ENCODE measurements at regions of chr2 and their contacts with region 1.

Region 1: DNA sequence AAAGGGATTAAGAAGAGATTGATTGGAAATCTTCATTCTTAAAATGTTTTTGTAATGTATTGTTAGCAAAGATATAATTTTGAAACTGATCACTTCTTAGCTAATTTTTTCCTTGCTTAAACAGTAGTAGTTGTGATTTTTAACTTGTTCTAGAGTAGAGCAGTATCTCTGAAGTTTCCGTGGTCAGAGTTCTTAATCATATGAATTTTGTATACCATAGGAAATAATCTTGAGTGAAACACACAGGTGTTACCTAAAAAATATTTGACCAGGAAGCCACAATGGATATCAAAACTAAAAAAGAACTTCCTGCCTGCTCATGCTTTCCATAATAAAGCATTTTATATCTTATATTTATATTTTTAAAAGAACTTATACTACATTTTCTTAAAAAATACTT is 907.1 kb downstream of the ERBB4 start:
- DNase-seq: no peak
- ATAC-seq: no peak
- H3K4me3 ChIP-seq: no peak overlapping the region
- H3K27ac ChIP-seq: no peak overlapping the region
- H3K4me1 ChIP-seq: no peaks in the 10 kb centered on the region
- H3K27me3 ChIP-seq: no peaks in the 10 kb centered on the region
- CTCF ChIP-seq: no peak
- EP300 ChIP-seq: no peak
- POLR2A ChIP-seq: no peak
- RAD21 ChIP-seq: no peak

Region 2: DNA sequence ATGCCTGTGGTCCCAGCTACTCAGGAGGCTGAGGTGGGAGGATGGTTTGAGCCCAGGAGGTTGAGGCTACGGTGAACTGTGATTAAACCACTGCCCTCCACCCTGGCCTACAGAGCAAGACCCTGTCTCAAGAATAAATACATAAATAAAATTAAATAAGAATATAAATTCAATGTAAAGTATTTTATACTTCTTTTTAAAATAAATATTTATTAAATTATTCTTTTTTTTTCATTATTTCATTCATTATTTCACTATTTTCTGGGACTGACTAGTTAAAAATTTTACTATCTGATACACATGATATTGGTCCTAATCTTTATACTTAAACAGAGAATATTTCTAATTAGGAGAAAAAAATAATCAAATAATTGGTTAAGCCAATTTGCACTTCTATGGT is 10.5 kb before region 1 on chr2:
- CTCF ChIA-PET with region 1: no interaction called
- POLR2A ChIA-PET with region 1: no interaction called
- in situ Hi-C with region 1: no loop called
- intact Hi-C with region 1: loop called (anchors 1 kb)
- DNase-seq: no peak
- ATAC-seq: no peak
- H3K4me3 ChIP-seq: no peak overlapping the region
- H3K27ac ChIP-seq: no peak overlapping the region
- H3K4me1 ChIP-seq: no peaks in the 10 kb centered on the region
- H3K27me3 ChIP-seq: no peaks in the 10 kb centered on the region
- CTCF ChIP-seq: no peak
- EP300 ChIP-seq: no peak
- POLR2A ChIP-seq: no peak
- RAD21 ChIP-seq: no peak

Region 3: GRCh38 chr2:211673133-211673905 is 41.8 kb after region 1 on chr2:
- CTCF ChIA-PET with region 1: no interaction called
- POLR2A ChIA-PET with region 1: no interaction called
- in situ Hi-C with region 1: no loop called
- intact Hi-C with region 1: no loop called
- DNase-seq: no peak
- ATAC-seq: no peak
- H3K4me3 ChIP-seq: no peak overlapping the region
- H3K27ac ChIP-seq: no peak overlapping the region
- H3K4me1 ChIP-seq: no peaks in the 10 kb centered on the region
- H3K27me3 ChIP-seq: no peaks in the 10 kb centered on the region
- CTCF ChIP-seq: no peak
- EP300 ChIP-seq: no peak
- POLR2A ChIP-seq: no peak
- RAD21 ChIP-seq: no peak

Region 4: DNA sequence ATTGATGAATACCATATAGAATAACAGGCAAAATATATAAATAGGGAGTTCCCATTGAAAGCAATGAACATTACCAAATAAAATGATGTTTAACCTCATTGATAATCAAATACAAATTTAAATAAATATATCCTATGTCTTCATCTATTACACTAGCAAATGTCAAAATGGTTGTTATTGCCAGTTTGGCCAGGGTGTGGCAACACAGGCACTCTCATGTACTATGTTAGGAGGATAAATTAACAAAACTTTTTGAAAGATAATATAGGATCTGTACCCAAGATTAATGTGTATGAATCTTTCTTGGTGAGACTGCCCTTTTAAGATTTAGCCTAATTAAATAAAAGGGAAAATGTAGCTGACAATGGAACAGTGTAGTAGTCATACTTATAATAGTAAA is 247.8 kb after region 1 on chr2:
- CTCF ChIA-PET with region 1: no interaction called
- POLR2A ChIA-PET with region 1: no interaction called
- in situ Hi-C with region 1: no loop called
- intact Hi-C with region 1: loop called (anchors 5 kb)
- DNase-seq: no peak
- ATAC-seq: no peak
- H3K4me3 ChIP-seq: no peak overlapping the region
- H3K27ac ChIP-seq: no peak overlapping the region
- H3K4me1 ChIP-seq: no peaks in the 10 kb centered on the region
- H3K27me3 ChIP-seq: no peaks in the 10 kb centered on the region
- CTCF ChIP-seq: no peak
- EP300 ChIP-seq: no peak
- POLR2A ChIP-seq: no peak
- RAD21 ChIP-seq: no peak

Measured in HepG2 (cell line).